Caco-2 (cell line): ENCODE measurements at regions of chrX and their contacts with region 1.

Region 1: DNA sequence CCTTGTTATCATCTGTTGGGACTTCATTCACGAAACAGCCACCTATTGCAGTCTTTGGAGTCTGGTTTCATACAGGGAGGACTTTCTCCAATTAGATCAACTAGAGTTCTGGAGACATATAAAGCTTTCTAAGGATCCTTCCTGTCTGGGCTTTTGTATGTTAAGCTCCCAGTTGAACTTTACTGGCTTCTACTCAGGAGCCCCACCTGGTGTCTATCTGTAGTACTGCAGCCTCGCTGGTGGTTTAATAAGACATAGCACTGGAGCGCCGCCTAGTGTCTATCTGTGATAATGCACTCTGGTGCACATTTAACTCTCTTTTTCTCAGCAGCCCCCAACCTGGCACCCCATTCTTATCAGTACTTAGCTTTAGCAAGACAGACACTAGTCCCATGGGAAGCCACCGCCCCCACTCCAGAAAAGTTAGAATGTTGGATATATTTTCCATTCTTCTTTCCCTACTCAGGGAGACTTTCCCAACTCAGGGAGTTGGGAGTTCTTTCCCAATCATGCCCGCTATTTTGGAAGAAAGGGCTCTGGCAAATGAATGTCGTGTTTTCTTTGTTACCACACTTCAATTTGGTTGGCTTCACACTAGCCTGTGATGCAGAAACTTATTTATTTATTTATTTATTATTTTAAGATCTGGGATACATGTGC is 36.9 kb upstream of the SYTL4 start:
- DNase-seq: peak; percentile 75 to 77
- H3K4me3 ChIP-seq: no peak overlapping the region
- H3K4me3 Mint-ChIP-seq: no peak overlapping the region
- H3K27ac Mint-ChIP-seq: no peak overlapping the region
- H3K4me1 ChIP-seq: no peaks in the 10 kb centered on the region
- H3K4me1 Mint-ChIP-seq: no peaks in the 10 kb centered on the region
- H3K27me3 ChIP-seq: no peaks in the 10 kb centered on the region
- H3K27me3 Mint-ChIP-seq: peaks cover 4% of the 10 kb centered on the region
- CTCF ChIP-seq: peak; percentile 92 to 95

Region 2: DNA sequence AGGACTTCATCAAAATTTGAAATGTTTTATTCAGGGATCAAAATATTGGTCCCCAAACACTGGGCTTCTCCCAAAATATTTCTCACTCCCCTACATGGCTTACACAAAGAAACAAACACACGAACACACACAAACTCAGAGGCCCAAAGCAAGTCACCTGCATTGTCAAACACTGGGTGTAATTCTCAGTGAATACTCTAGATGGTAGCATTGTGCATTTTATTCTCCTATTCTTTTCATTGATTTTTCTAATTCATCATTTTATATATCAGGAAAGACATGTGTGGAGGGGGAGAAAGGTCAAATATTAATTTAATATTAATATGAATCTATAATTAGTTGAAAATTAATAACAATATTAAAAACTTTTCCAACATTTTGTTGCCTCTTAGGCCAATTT is 256.3 kb before region 1 on chrX:
- CTCF ChIA-PET with region 1: interaction called, 6 read pairs
- POLR2A ChIA-PET with region 1: no interaction called
- intact Hi-C with region 1: loop called (anchors 5 kb)
- DNase-seq: peak in 1 of 2 experiments; percentile 6
- H3K4me3 ChIP-seq: no peak overlapping the region
- H3K4me3 Mint-ChIP-seq: no peak overlapping the region
- H3K27ac Mint-ChIP-seq: no peak overlapping the region
- H3K4me1 ChIP-seq: no peaks in the 10 kb centered on the region
- H3K4me1 Mint-ChIP-seq: no peaks in the 10 kb centered on the region
- H3K27me3 ChIP-seq: no peaks in the 10 kb centered on the region
- H3K27me3 Mint-ChIP-seq: peaks cover 6% of the 10 kb centered on the region
- CTCF ChIP-seq: peak; percentile 41

Region 3: DNA sequence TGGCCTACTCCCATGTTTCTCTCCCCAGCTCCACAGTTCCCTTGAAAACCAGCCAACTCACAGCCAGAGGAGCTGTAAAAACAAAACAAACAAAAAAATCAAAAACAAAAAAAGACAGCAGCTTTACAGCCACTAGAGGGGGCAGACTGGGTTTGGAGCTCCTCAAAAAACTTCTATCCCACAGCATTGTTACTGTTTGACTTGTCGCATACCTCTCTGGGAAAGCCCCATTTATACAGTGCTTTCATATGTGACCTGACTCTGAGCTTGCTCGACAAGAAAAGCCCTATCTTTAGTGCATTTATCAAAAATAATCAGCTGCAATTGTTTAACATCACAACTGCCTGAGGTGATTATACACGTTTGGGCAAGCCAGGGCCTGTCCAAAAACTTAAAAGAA is 153.8 kb before region 1 on chrX:
- CTCF ChIA-PET with region 1: interaction called, 11 read pairs
- POLR2A ChIA-PET with region 1: no interaction called
- intact Hi-C with region 1: no loop called
- DNase-seq: peak; percentile 38 to 55
- H3K4me3 ChIP-seq: no peak overlapping the region
- H3K4me3 Mint-ChIP-seq: no peak overlapping the region
- H3K27ac Mint-ChIP-seq: peak overlapping the region; percentile 64
- H3K4me1 ChIP-seq: 0 out of 2 replicates have a peak, but pooled peaks cover 7% of the 10 kb centered on the region
- H3K4me1 Mint-ChIP-seq: no peaks in the 10 kb centered on the region
- H3K27me3 ChIP-seq: no peaks in the 10 kb centered on the region
- H3K27me3 Mint-ChIP-seq: no peaks in the 10 kb centered on the region
- CTCF ChIP-seq: peak; percentile 22 to 59

Region 4: GRCh38 chrX:100625985-100626491 is 142.8 kb before region 1 on chrX:
- CTCF ChIA-PET with region 1: no interaction called
- POLR2A ChIA-PET with region 1: no interaction called
- intact Hi-C with region 1: no loop called
- DNase-seq: no peak
- H3K4me3 ChIP-seq: no peak overlapping the region
- H3K4me3 Mint-ChIP-seq: no peak overlapping the region
- H3K27ac Mint-ChIP-seq: no peak overlapping the region
- H3K4me1 ChIP-seq: no peaks in the 10 kb centered on the region
- H3K4me1 Mint-ChIP-seq: no peaks in the 10 kb centered on the region
- H3K27me3 ChIP-seq: no peaks in the 10 kb centered on the region
- H3K27me3 Mint-ChIP-seq: no peaks in the 10 kb centered on the region
- CTCF ChIP-seq: no peak

Region 5: DNA sequence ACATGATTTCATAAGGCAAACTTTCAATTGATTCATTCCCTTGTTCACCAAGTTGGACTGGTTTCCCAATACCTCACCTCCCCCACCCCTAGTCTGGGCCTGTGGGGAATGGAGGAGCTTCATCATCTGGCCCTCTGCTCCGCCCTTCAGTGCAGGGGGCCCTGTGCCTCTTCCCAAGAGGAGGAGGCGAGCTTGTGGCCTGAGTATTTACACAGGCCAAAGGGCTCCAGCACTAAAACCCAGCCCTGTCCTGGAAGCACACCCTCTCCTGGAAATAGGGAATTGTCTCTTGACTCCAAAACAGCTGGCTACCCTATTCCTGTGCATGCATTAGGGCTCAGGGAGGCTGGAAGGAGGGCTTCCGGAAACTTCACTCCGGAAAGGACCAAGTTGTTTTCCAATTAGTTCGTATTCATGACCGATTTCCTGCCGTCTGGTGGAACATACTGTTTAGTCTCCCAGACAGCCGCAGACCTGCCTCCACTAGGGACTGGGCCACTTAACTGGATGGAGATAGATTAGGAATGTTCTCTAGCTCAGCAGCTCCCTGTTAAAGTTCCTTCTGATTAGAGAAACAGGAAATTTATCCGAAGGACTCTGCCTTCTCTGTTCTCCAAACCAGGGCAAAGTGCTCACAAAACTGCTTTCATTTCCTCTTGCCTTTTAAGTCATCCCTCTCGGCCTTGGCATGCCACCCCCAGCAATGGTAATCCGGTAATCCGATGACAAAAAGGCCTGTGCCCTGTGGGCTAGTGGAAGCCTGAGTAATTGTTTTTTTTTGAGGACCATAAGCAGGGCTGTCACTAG is 119.1 kb before region 1 on chrX:
- CTCF ChIA-PET with region 1: interaction called, 7 read pairs
- POLR2A ChIA-PET with region 1: no interaction called
- intact Hi-C with region 1: loop called (anchors 1 kb)
- DNase-seq: peak; percentile 88 to 92
- H3K4me3 ChIP-seq: no peak overlapping the region
- H3K4me3 Mint-ChIP-seq: peak overlapping the region; percentile 71
- H3K27ac Mint-ChIP-seq: peak overlapping the region; percentile 97
- H3K4me1 ChIP-seq: peaks cover 47% of the 10 kb centered on the region
- H3K4me1 Mint-ChIP-seq: peaks cover 26% of the 10 kb centered on the region
- H3K27me3 ChIP-seq: no peaks in the 10 kb centered on the region
- H3K27me3 Mint-ChIP-seq: no peaks in the 10 kb centered on the region
- CTCF ChIP-seq: no peak

Region 6: DNA sequence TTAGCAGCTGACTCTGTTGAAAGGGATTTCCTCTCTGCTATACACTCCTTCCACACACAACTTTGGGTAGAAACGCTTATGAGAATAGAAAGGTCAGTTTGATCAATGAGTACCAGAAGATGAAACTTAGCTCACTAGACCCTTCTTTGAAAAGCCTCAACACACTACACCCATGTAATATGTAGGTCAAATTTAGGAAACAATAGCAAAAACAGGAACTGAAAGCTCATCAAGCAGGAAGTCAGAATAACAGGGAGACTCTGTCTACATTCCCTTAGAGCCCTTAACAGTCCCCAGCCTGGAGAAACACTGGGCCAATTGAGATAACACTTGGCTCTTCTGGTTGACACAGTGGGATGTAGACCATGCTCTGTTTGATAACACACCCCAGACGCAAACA is 94.1 kb before region 1 on chrX:
- CTCF ChIA-PET with region 1: interaction called, 40 read pairs
- POLR2A ChIA-PET with region 1: no interaction called
- intact Hi-C with region 1: loop called (anchors 1 kb)
- DNase-seq: no peak
- H3K4me3 ChIP-seq: no peak overlapping the region
- H3K4me3 Mint-ChIP-seq: no peak overlapping the region
- H3K27ac Mint-ChIP-seq: no peak overlapping the region
- H3K4me1 ChIP-seq: no peaks in the 10 kb centered on the region
- H3K4me1 Mint-ChIP-seq: peaks cover 6% of the 10 kb centered on the region
- H3K27me3 ChIP-seq: no peaks in the 10 kb centered on the region
- H3K27me3 Mint-ChIP-seq: no peaks in the 10 kb centered on the region
- CTCF ChIP-seq: no peak

Region 7: GRCh38 chrX:100685284-100685996 is 83.4 kb before region 1 on chrX:
- CTCF ChIA-PET with region 1: interaction called, 60 read pairs
- POLR2A ChIA-PET with region 1: no interaction called
- intact Hi-C with region 1: loop called (anchors 1 kb)
- DNase-seq: peak; percentile 56 to 75
- H3K4me3 ChIP-seq: no peak overlapping the region
- H3K4me3 Mint-ChIP-seq: no peak overlapping the region
- H3K27ac Mint-ChIP-seq: no peak overlapping the region
- H3K4me1 ChIP-seq: no peaks in the 10 kb centered on the region
- H3K4me1 Mint-ChIP-seq: no peaks in the 10 kb centered on the region
- H3K27me3 ChIP-seq: no peaks in the 10 kb centered on the region
- H3K27me3 Mint-ChIP-seq: no peaks in the 10 kb centered on the region
- CTCF ChIP-seq: peak; percentile 83 to 87

Region 8: GRCh38 chrX:100964362-100964761 is 195.6 kb after region 1 on chrX:
- CTCF ChIA-PET with region 1: no interaction called
- POLR2A ChIA-PET with region 1: no interaction called
- intact Hi-C with region 1: no loop called
- DNase-seq: no peak
- H3K4me3 ChIP-seq: no peak overlapping the region
- H3K4me3 Mint-ChIP-seq: no peak overlapping the region
- H3K27ac Mint-ChIP-seq: no peak overlapping the region
- H3K4me1 ChIP-seq: no peaks in the 10 kb centered on the region
- H3K4me1 Mint-ChIP-seq: peaks cover 7% of the 10 kb centered on the region
- H3K27me3 ChIP-seq: no peaks in the 10 kb centered on the region
- H3K27me3 Mint-ChIP-seq: no peaks in the 10 kb centered on the region
- CTCF ChIP-seq: no peak